Cardiac septum (tissue), 1 donor: ENCODE measurements at regions of chr5 and their contacts with region 1.

Region 1: GRCh38 chr5:42691413-42691937 is 65.1 kb upstream of the CCDC152 start:
- DNase-seq: peak; percentile 76

Region 2: GRCh38 chr5:42566652-42567295 is 124.7 kb before region 1 on chr5:
- intact Hi-C with region 1: no loop called
- DNase-seq: no peak

Region 3: DNA sequence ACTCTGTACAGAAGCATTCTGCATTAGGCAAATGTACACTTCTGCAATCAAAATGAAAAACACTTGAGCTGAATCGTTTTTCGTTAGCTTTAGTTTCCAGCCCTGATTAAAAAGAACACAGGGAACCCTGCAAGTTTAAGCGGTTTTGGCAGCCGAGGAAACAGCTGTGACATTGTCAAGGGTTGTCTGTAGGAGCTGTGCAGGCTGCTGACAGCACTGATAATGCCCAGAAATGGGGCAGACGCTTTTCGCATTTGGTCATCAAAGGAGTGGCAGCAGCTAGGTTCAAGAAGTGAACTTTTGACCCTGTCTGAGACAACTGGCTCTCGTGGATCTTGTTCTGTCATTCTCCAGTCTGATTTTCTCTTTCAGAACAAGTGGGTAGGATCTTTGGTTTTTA is 100.5 kb before region 1 on chr5:
- intact Hi-C with region 1: loop called (anchors 5 kb)
- DNase-seq: peak; percentile 85

Region 4: GRCh38 chr5:42715785-42716184 is 24.3 kb after region 1 on chr5:
- intact Hi-C with region 1: no loop called
- DNase-seq: no peak

Region 5: DNA sequence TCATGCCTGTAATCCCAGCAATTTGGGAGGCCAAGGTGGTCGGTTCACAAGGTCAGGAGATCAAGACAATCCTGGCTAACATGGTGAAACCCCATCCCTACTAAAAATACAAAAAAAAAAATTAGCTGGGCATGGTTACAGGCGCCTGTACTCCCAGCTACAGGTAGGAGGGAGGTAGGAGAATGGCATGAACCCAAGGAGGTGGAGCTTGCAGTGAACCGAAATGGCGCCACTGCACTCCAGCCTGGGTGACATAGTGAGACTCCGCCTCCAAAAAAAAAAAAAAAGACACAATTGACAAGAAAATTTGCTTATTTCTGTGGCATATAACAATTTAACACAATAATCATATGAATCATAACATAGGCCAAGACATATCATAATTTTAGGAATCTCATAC is 394.0 kb after region 1 on chr5:
- intact Hi-C with region 1: no loop called
- DNase-seq: no peak